ENCODE measurements at regions of chr10 and their contacts with region 1.

Region 1: GRCh38 chr10:124354411-124355382 is 64.0 kb downstream of the OAT start:
- DNase-seq: no peak
- H3K4me3 ChIP-seq: no peak overlapping the region
- H3K27ac ChIP-seq: no peak overlapping the region
- H3K4me1 ChIP-seq: peaks cover 24% of the 10 kb centered on the region
- H3K27me3 ChIP-seq: no peaks in the 10 kb centered on the region
- CTCF ChIP-seq: no peak

Region 2: GRCh38 chr10:123991622-123992607 is 362.8 kb before region 1 on chr10:
- CTCF ChIA-PET with region 1: no interaction called
- dilution Hi-C with region 1: no loop called
- in situ Hi-C with region 1: no loop called
- intact Hi-C with region 1: no loop called
- DNase-seq: no peak
- H3K4me3 ChIP-seq: peak overlapping the region in 2 of 3 experiments; percentile 17 to 33
- H3K27ac ChIP-seq: no peak overlapping the region
- H3K4me1 ChIP-seq: peaks cover 32% of the 10 kb centered on the region
- H3K27me3 ChIP-seq: no peaks in the 10 kb centered on the region
- CTCF ChIP-seq: no peak

Region 3: DNA sequence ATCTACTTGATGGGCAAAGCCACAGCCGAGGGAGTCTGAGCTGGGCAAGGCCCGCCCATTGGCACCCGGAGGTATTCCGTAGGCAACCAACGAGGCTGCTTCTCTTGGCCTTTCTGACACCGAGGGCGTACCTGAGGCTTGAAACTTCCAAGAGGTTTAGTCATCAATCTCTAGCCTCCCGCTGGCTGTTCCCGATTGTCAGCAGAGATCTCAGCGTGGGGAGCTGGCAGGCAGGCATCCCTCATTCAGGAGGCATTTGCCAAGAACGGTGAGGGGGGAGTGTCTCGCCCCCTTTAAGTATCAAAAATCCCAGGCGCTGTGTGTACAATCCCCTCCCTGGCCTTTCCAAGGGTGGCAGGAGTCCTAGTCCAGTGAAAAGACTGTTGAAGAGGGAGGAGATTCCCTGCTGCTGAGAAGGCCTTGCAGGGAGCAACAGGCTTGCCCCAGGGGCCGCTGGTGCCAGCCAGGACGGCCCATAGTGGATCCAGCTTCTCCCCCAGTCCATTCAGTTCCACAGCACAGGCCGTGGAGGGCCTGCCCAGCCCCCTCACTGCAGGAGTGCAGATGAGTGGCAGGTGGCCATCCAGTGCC is 24.3 kb after region 1 on chr10:
- CTCF ChIA-PET with region 1: no interaction called
- dilution Hi-C with region 1: no loop called
- in situ Hi-C with region 1: no loop called
- intact Hi-C with region 1: loop called (anchors 2 kb)
- DNase-seq: peak; percentile 90
- H3K4me3 ChIP-seq: no peak overlapping the region
- H3K27ac ChIP-seq: no peak overlapping the region
- H3K4me1 ChIP-seq: peaks cover 12% of the 10 kb centered on the region
- H3K27me3 ChIP-seq: no peaks in the 10 kb centered on the region
- CTCF ChIP-seq: no peak

Region 4: GRCh38 chr10:124601431-124602120 is 246.9 kb after region 1 on chr10:
- CTCF ChIA-PET with region 1: no interaction called
- dilution Hi-C with region 1: no loop called
- in situ Hi-C with region 1: no loop called
- intact Hi-C with region 1: no loop called
- DNase-seq: no peak
- H3K4me3 ChIP-seq: no peak overlapping the region
- H3K27ac ChIP-seq: no peak overlapping the region
- H3K4me1 ChIP-seq: no peaks in the 10 kb centered on the region
- H3K27me3 ChIP-seq: no peaks in the 10 kb centered on the region
- CTCF ChIP-seq: no peak

Region 5: GRCh38 chr10:125406998-125407502 is 1052.4 kb after region 1 on chr10:
- CTCF ChIA-PET with region 1: no interaction called
- dilution Hi-C with region 1: no loop called
- in situ Hi-C with region 1: no loop called
- intact Hi-C with region 1: loop called (anchors 10 kb)
- DNase-seq: peak; percentile 97
- H3K4me3 ChIP-seq: no peak overlapping the region
- H3K27ac ChIP-seq: peak overlapping the region; percentile 87
- H3K4me1 ChIP-seq: peaks cover 23% of the 10 kb centered on the region
- H3K27me3 ChIP-seq: no peaks in the 10 kb centered on the region
- CTCF ChIP-seq: no peak